K562 (cell line): ENCODE measurements at regions of chr15 and their contacts with region 1.

Region 1: GRCh38 chr15:38072348-38073177 is 138.1 kb downstream of the TMCO5A start:
- DNase-seq: peak in 2 of 4 experiments; percentile 16 to 31
- ATAC-seq: peak; percentile 83
- H3K4me3 ChIP-seq: peak overlapping the region; percentile 7; the same call in 1 of the 2 replicates
- H3K27ac ChIP-seq: no peak overlapping the region
- H3K4me1 ChIP-seq: peaks cover 0 to 8% of the 10 kb centered on the region in 2 experiments; a peak in 3 of 5 replicates
- H3K27me3 ChIP-seq: peaks cover 34 to 35% of the 10 kb centered on the region in 2 experiments
- CTCF ChIP-seq: peak in 1 of 3 experiments; percentile 9; a peak in 1 of 6 replicates
- EP300 ChIP-seq: no peak
- POLR2A ChIP-seq: no peak
- RAD21 ChIP-seq: peak in 1 of 2 experiments; percentile 24; a peak in 1 of 4 replicates

Region 2: DNA sequence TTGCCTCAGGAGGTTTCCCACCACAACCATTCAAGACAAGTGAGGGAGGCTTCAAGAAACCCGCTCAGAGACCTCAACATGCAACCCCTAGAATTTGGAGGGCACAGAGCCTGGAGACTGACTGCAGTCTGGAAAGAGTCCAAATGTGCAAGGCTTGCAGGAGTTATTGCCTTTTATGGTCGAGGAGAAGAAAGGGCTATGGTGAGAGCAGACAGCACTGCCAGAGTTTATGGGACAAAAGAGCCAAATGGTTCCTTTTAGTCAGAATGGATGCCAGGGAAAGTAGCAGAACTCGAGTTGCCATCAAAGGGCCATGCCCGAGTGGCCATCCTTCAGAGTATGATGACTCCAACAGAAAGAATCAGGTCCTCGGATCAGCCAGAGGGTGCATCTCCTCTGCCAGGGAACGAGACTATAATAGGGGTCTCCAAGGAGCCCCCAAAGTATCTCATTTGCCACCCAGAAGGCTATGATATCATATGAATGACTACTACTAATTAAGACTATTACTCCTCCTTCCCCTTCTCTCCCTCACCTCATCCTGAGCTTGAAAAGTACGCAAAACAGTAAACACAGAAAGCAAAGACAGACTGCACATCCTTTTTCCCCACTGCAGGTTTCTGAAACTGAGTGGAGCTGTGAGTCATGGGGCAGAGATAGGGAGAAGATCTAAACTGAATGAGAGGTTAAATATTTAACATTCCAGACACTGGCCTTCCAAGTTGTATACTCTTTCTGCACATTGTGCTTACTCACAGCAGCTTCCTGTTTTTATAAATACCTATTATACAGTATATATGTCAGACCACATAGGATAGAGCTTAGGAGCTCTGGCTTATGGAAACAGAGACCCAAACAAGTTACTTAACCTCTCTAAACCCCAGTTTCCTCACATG is 172.0 kb before region 1 on chr15:
- CTCF ChIA-PET with region 1: no interaction called
- POLR2A ChIA-PET with region 1: no interaction called
- in situ Hi-C with region 1: no loop called
- intact Hi-C with region 1: no loop called
- DNase-seq: no peak
- ATAC-seq: no peak
- H3K4me3 ChIP-seq: no peak overlapping the region
- H3K27ac ChIP-seq: no peak overlapping the region
- H3K4me1 ChIP-seq: no peaks in the 10 kb centered on the region
- H3K27me3 ChIP-seq: no peaks in the 10 kb centered on the region
- CTCF ChIP-seq: no peak
- EP300 ChIP-seq: no peak
- POLR2A ChIP-seq: no peak
- RAD21 ChIP-seq: no peak

Region 3: DNA sequence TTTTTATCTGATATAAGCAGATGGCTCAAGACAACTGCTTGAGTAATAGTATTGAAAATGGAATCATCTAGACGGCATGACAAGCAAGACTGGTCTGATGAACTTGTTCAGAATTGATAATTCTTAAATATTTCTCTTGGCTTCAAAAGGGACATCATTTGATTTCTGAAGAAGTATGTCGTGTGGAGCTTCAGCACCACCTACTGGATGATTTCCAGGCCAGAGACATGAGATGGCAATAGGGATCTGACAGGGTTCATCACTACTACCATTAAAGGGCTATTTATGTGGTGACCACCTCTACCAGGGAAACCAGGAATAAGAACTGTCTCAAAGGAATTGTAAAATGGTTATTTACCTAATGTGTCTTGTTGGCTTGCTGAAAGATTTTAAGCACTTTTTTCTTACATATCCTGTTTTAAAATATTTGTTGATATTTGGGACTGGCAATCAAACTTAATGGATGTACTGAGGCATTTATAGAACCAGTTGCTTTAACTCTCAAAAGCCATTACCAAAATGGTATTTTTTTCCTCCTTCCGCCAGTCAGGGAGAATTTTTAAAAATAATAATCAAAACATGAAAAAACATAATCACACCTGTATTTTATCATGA is 281.9 kb after region 1 on chr15:
- CTCF ChIA-PET with region 1: no interaction called
- POLR2A ChIA-PET with region 1: no interaction called
- in situ Hi-C with region 1: no loop called
- intact Hi-C with region 1: loop called (anchors 10 kb)
- DNase-seq: peak; percentile 39 to 73 (median 42)
- ATAC-seq: peak; percentile 92
- H3K4me3 ChIP-seq: no peak overlapping the region
- H3K27ac ChIP-seq: no peak overlapping the region
- H3K4me1 ChIP-seq: no peaks in the 10 kb centered on the region
- H3K27me3 ChIP-seq: no peaks in the 10 kb centered on the region
- CTCF ChIP-seq: peak; percentile 57 to 77 (median 77)
- EP300 ChIP-seq: no peak
- POLR2A ChIP-seq: no peak
- RAD21 ChIP-seq: peak; percentile 75 to 82